H1 (cell line): ENCODE measurements at regions of chr6 and their contacts with region 1.

Region 1: GRCh38 chr6:10429638-10430427 is 15.0 kb upstream of the TFAP2A start:
- DNase-seq: peak in 1 of 2 experiments; percentile 50
- H3K4me3 ChIP-seq: no peak overlapping the region
- H3K27ac ChIP-seq: no peak overlapping the region
- H3K4me1 ChIP-seq: peaks cover 3 to 17% (median 7%) of the 10 kb centered on the region in 4 experiments
- H3K27me3 ChIP-seq: peaks cover 30 to 42% (median 37%) of the 10 kb centered on the region in 4 experiments
- CTCF ChIP-seq: peak in 2 of 3 experiments; percentile 53 to 69; a peak in 3 of 4 replicates
- EP300 ChIP-seq: no peak
- POLR2A ChIP-seq: no peak
- RAD21 ChIP-seq: peak; percentile 89 to 90

Region 2: DNA sequence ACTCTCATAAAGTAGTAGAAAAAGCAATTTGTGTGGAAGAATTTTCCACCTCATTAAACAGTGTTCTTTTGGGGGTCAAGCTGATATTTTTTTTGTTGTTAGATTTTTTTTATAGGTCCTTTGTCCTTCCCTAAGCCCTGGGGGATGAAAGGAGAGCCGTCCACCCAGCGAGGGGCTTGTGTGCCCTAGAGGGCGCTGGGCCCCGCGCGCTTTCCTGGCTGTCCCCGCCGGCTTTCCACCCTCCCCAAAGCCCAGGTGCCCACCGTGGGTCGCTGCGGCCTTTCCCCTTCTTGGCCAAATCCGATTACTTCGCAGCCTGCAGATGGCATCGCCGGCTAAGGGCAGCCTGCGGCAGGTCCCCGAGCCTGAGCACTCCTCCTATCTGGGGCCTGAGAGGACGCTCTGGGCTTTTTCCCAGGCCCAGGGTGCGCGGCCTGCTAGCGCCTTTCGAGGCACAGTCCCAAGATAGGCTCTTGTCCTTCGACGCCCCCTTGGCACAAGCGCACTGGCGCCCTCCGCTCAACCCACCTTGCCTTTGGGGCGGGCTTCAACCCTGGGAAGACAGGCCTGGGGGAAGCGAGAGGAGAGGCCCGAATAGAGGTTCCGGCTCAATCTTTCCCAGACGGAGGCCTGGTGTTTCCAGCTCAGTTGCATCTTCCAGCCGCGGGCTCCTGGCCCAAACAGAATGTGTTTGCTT is 48.6 kb before region 1 on chr6:
- CTCF ChIA-PET with region 1: interaction called, 365 read pairs
- POLR2A ChIA-PET with region 1: interaction called, 3 read pairs
- DNase-seq: peak in 1 of 2 experiments; percentile 81
- H3K4me3 ChIP-seq: peak overlapping the region in 3 of 4 experiments; percentile 9 to 46 (median 26); a peak in 5 of 8 replicates
- H3K27ac ChIP-seq: no peak overlapping the region
- H3K4me1 ChIP-seq: peaks cover 8 to 32% (median 19%) of the 10 kb centered on the region in 4 experiments
- H3K27me3 ChIP-seq: peaks cover 55 to 69% (median 63%) of the 10 kb centered on the region in 4 experiments
- CTCF ChIP-seq: peak; percentile 26 to 72 (median 38)
- EP300 ChIP-seq: peak in 1 of 2 experiments; percentile 32; a peak in 1 of 3 replicates
- POLR2A ChIP-seq: no peak
- RAD21 ChIP-seq: peak; percentile 68 to 79

Region 3: DNA sequence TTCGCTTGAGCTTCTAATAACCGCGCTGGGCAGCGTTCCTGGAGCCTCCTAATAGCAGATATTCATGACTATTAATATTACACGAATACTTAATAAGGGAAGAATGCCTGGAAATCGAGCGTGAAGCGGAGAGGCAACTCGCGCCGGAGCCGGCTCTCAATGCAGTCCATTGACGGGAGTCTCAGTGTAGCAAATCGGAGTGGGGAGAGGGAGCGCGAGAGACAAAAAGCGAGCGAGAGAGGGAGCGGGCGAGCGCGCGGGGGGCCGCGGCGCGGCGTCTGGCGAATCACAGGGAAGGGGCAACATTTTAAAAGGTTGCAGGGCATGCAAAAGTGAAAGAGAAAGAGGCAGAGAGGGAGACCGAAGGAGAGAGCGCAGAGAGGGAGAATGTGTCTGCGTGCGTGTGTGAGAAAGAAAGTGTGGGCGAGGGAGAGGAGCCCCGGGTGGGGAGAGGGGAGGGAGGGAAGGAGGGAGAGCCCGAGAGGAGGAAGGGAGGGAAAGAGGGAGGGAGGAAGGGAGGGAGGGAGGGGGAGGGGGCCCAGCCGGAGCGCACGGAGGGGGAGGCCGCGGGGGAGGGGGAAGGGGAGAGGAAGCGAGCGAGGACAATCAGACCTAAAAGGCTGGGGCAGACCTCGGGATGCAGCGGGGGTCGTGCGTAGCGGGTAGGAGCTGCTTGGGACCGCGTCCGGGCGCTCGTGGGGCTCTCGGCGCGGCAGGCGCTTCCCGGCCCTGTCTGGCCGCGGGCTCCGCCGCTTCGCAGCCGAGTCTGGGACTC is 17.7 kb before region 1 on chr6:
- CTCF ChIA-PET with region 1: interaction called, 135 read pairs
- POLR2A ChIA-PET with region 1: interaction called, 10 read pairs
- DNase-seq: peak in 1 of 2 experiments; percentile 86
- H3K4me3 ChIP-seq: peak overlapping the region; percentile 42 to 58 (median 48)
- H3K27ac ChIP-seq: no peak overlapping the region
- H3K4me1 ChIP-seq: peaks cover 4 to 39% (median 28%) of the 10 kb centered on the region in 4 experiments
- H3K27me3 ChIP-seq: peaks cover 73 to 98% (median 88%) of the 10 kb centered on the region in 4 experiments
- CTCF ChIP-seq: no peak
- EP300 ChIP-seq: no peak
- POLR2A ChIP-seq: no peak
- RAD21 ChIP-seq: no peak

Region 4: GRCh38 chr6:10418928-10419748 is 10.7 kb before region 1 on chr6:
- CTCF ChIA-PET with region 1: interaction called, 135 read pairs
- POLR2A ChIA-PET with region 1: interaction called, 10 read pairs
- DNase-seq: peak in 1 of 2 experiments; percentile 85
- H3K4me3 ChIP-seq: peak overlapping the region; percentile 19 to 53 (median 34)
- H3K27ac ChIP-seq: no peak overlapping the region
- H3K4me1 ChIP-seq: peaks cover 6 to 54% (median 38%) of the 10 kb centered on the region in 4 experiments
- H3K27me3 ChIP-seq: peaks cover 86 to 100% (median 98%) of the 10 kb centered on the region in 4 experiments
- CTCF ChIP-seq: no peak
- EP300 ChIP-seq: no peak
- POLR2A ChIP-seq: no peak
- RAD21 ChIP-seq: no peak

Region 5: GRCh38 chr6:10465629-10466504 is 36.0 kb after region 1 on chr6:
- CTCF ChIA-PET with region 1: interaction called, 13 read pairs
- POLR2A ChIA-PET with region 1: no interaction called
- DNase-seq: peak in 1 of 2 experiments; percentile 85
- H3K4me3 ChIP-seq: no peak overlapping the region
- H3K27ac ChIP-seq: no peak overlapping the region
- H3K4me1 ChIP-seq: peaks cover 0 to 5% (median 4%) of the 10 kb centered on the region in 4 experiments; a peak in 5 of 7 replicates
- H3K27me3 ChIP-seq: no peaks in the 10 kb centered on the region
- CTCF ChIP-seq: peak; percentile 64 to 77 (median 71)
- EP300 ChIP-seq: no peak
- POLR2A ChIP-seq: no peak
- RAD21 ChIP-seq: peak; percentile 51 to 56